ENCODE measurements at regions of chr2 and their contacts with region 1.

Region 1: GRCh38 chr2:37365669-37366068 is 21.2 kb downstream of the QPCT start:
- DNase-seq: peak; percentile 59
- ATAC-seq: peak; percentile 64
- H3K4me3 Mint-ChIP-seq: no peak overlapping the region
- H3K27ac Mint-ChIP-seq: no peak overlapping the region
- H3K4me1 Mint-ChIP-seq: no peaks in the 10 kb centered on the region
- H3K27me3 Mint-ChIP-seq: peaks cover 28% of the 10 kb centered on the region
- CTCF ChIP-seq: no peak

Region 2: GRCh38 chr2:37318401-37318800 is 47.3 kb before region 1 on chr2:
- CTCF ChIA-PET with region 1: no interaction called
- POLR2A ChIA-PET with region 1: interaction called, 4 read pairs
- intact Hi-C with region 1: loop called (anchors 1 kb)
- DNase-seq: no peak
- ATAC-seq: peak; percentile 31
- H3K4me3 Mint-ChIP-seq: no peak overlapping the region
- H3K27ac Mint-ChIP-seq: no peak overlapping the region
- H3K4me1 Mint-ChIP-seq: peaks cover 61% of the 10 kb centered on the region
- H3K27me3 Mint-ChIP-seq: no peaks in the 10 kb centered on the region
- CTCF ChIP-seq: no peak

Region 3: GRCh38 chr2:37343537-37344434 is 21.9 kb before region 1 on chr2:
- CTCF ChIA-PET with region 1: interaction called, 4 read pairs
- POLR2A ChIA-PET with region 1: no interaction called
- intact Hi-C with region 1: loop called (anchors 2 kb)
- DNase-seq: no peak
- ATAC-seq: no peak
- H3K4me3 Mint-ChIP-seq: peak overlapping the region; percentile 67
- H3K27ac Mint-ChIP-seq: no peak overlapping the region
- H3K4me1 Mint-ChIP-seq: peaks cover 22% of the 10 kb centered on the region
- H3K27me3 Mint-ChIP-seq: peaks cover 32% of the 10 kb centered on the region
- CTCF ChIP-seq: no peak

Region 4: DNA sequence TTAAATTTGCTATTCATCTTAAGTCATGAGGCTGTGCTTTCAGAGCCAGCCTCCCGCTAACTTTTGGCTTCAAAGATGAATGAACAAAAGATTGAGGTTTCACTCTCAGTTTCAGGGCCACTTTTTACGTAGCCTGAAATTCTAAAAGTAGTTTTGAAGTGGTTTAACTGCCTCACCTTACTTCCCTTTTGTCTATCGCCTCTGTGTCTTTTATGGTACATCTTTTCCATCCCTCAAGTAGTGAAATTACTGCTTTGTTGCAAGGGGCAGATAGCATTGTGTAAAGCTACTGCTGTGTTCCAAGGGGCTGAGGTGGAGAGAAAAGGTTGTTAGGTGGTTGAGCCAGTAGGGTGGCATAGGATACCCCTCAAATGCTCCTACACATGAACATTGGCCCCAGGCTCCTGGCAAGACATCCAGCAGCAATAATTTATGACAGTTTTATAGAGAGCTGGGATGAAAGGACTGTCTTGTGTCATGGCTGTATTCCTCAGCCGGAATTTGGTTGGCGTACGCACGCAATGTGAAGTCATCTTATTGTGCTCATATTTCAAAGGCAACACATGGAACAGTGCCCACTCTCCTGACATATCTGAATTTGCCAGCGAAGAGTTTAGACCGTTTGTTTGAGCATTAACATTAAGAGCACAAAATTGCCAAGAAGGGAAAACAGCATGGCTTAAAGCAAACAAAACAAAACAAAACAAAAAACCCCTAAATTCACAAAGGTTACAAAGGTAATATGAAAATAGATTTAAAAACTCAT is 10.9 kb after region 1 on chr2:
- CTCF ChIA-PET with region 1: interaction called, 17 read pairs
- POLR2A ChIA-PET with region 1: interaction called, 30 read pairs
- intact Hi-C with region 1: no loop called
- DNase-seq: peak; percentile 72
- ATAC-seq: peak; percentile 83
- H3K4me3 Mint-ChIP-seq: peak overlapping the region; percentile 28
- H3K27ac Mint-ChIP-seq: peak overlapping the region; percentile 81
- H3K4me1 Mint-ChIP-seq: peaks cover 29% of the 10 kb centered on the region
- H3K27me3 Mint-ChIP-seq: peaks cover 38% of the 10 kb centered on the region
- CTCF ChIP-seq: no peak

Measured in activated CD8-positive, alpha-beta T cell treated with anti-CD3 and anti-CD28 coated beads for 36 hours (primary cell).